Right ventricle myocardium inferior (tissue), 1 donor: ENCODE measurements at regions of chr15 and their contacts with region 1.

Region 1: DNA sequence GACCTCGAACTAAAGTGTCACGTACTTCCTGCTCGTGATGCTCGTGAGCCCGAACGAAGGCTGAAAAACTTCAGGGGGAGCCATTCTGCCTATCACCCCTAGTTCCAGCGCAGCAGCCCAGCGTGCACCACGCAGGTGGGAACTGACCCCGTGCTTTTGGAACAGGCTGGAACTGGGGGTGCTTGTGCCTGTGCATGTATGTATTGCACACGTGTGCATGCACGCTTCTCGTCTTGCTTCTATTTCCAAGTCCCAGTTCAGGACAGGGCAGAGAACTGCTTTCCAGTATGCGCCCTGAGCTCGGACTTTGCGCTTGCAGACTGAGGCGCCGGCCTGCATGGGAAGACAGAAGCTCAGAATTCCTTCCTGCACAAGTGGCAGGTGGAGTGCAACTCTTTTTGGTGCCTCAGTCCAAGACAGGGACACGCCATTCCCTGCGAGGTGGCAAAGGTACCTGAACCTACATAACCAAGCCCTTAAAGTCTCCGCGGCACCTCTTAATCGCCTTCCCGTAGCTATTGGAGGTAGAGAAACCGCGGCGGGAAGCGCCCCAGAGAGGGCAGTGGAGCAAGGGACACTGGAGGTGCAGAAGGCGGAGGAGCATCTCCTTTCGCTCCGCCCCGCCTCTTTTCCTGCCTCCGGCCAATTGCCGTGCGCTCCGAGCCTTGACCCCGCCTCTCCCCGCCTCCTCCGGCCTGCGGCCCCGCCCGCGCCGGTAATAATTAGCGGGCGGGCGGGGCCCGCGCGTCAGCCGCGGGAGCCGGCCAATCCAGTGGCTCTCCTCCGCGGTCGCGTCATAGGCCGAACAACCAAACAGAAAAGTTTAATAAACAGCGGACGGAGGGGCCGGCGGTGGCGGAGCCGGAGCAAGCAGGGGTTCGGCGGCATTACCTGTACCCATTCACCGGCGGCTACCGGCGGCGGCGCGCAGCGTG is at the start of gene ZFAND6:
- DNase-seq: peak; percentile 97
- ATAC-seq: peak; percentile 99
- total RNA-seq, gene ZFAND6: 72.4 TPM

Region 2: GRCh38 chr15:79896637-79897379 is 162.3 kb before region 1 on chr15 and contains the start of gene MTHFS:
- intact Hi-C with region 1: loop called (anchors 10 kb)
- DNase-seq: peak; percentile 91
- ATAC-seq: peak; percentile 99
- total RNA-seq, gene MTHFS: 19.1 TPM

Region 3: DNA sequence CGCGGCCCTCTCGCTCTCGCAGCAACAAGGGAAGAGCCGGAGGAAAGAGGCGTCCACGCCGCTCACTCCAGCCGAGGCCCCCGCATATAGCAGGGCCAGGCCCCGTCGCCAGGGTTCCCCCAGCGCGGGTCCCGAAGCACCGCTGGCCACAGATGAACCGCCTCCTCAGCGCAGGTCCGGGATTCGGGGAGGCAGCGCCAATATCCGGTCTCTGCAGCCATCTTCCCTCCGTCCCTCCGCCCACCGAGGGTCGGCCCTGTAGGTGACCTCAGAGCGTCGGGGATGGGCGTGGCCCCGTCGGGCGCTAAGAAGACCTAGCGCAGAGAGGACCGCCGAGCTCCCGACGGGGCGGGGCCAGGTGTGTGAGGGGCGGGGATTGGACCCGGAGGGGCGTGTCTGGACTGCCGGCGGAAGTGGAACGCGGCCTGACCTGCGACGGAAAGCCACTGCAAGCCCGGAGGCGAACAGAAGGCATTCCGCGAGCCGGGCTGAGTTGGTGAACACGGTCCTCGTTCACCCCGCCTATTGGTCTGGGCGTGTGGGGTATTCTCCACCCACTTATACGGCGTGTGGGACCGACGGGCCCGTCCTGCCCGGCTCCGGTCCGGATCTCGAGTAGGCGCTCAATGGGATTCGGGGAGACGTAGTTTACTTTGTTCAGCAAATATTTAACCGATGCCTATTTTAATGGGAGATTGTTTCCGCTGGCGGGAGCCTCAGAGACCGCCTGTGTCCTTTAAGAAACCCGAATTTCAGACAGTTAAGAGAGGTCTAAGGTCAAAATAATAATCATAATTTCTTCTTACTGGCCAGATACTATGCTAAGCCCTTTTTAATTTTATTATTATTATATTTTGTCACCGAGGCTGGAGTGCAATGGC is 135.4 kb before region 1 on chr15:
- intact Hi-C with region 1: loop called (anchors 1 kb)
- DNase-seq: peak; percentile 98
- ATAC-seq: peak; percentile 99

Region 4: GRCh38 chr15:80072285-80072994 is 13.3 kb after region 1 on chr15:
- intact Hi-C with region 1: loop called (anchors 1 kb)
- DNase-seq: no peak
- ATAC-seq: peak; percentile 92

Region 5: GRCh38 chr15:80152180-80152845 is 93.2 kb after region 1 on chr15:
- intact Hi-C with region 1: loop called (anchors 2 kb)
- DNase-seq: peak; percentile 98
- ATAC-seq: peak; percentile 90